ENCODE measurements at regions of chr2 and their contacts with region 1.

Region 1: GRCh38 chr2:136135921-136136906 is 18.3 kb upstream of the CXCR4 start:
- DNase-seq: peak; percentile 78
- H3K4me3 Mint-ChIP-seq: no peak overlapping the region
- H3K27ac Mint-ChIP-seq: peak overlapping the region; percentile 79
- H3K4me1 Mint-ChIP-seq: peaks cover 94% of the 10 kb centered on the region
- H3K27me3 Mint-ChIP-seq: peaks cover 25% of the 10 kb centered on the region

Region 2: DNA sequence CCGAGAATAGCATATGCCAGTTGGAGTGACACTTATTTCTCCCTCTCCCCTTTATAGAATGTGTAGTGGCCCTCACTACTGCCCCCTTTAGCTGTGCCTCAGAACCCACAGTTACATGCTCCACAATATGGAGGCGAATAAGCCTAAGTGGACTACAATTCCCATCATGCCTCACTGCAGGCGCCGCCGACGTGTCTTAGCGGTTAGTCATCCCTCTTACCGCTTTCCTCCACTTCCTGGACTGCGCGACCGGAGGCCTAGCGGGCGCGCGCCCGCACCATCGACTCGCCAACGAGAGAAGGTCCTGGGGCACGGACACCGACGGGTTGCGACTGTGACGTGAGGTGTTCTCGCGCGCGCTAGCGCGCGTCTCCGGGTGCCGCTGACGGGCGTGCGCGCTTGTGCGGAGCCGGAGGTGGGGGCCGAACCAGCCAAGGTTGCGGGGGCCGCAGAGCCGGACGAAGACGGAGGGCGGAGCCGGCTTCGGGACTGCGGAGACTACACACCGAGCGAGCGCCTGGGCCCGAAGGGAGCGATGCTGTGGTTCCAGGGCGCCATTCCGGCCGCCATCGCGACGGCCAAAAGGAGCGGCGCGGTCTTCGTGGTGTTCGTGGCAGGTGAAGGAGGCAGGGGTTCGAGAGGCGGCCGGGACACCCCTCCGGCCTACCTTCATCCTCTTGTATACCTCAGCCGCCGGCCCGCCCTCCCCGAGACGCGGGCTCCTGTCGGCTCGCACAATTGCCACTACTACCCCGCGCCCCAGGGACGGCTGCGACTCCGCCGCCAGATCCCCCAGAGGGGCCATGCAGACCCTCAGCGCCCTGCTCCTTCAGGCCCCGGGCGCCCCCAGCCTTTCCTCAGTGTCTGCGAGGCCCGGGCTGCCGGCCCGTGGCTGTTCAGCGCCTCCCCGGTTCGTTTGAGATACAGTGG is 394.6 kb before region 1 on chr2 and contains the start of gene UBXN4:
- CTCF ChIA-PET with region 1: no interaction called
- intact Hi-C with region 1: loop called (anchors 5 kb)
- DNase-seq: peak; percentile 98
- H3K4me3 Mint-ChIP-seq: peak within 1 kb of the TSS; percentile 98
- H3K27ac Mint-ChIP-seq: peak within 1 kb of the TSS; percentile 99
- H3K4me1 Mint-ChIP-seq: peaks cover 30% of the 10 kb centered on the region
- H3K27me3 Mint-ChIP-seq: no peaks in the 10 kb centered on the region
- total RNA-seq, gene UBXN4: 100 to 105 TPM

Region 3: DNA sequence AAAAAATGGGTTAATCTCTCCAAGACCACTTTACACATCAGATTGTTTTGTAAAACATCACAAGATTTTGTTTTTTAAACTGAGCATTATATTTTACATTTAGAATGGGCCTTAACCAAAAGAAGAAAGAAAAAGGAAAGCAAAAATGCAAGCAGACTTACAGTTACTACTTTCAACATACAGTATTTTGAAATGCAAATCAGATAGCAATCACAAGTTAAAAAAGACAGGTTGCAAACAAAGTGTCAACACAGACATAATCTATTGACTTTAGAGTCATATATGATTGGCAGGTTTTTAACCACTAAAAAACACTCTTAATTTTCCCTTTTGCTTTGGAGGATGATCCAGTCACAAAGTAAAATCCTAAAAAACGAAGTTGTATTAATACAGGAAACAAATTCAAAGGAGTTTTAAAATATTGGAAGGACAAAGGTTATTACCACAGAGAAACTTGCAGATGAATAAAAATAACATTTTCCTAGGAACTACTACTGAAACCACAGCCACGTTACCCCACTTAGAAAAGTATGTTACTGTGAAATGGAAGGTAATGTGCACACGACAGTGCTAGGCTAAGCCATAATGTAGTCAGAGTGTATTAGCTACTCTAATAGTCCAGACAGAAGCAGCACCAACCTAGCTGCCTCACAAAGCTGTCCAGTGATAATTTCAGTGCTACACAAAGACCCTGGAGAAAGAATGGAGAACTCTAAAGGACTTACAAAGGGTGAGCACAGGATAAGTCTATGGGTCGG is 173.7 kb before region 1 on chr2:
- CTCF ChIA-PET with region 1: no interaction called
- intact Hi-C with region 1: no loop called
- DNase-seq: no peak
- H3K4me3 Mint-ChIP-seq: no peak overlapping the region
- H3K27ac Mint-ChIP-seq: no peak overlapping the region
- H3K4me1 Mint-ChIP-seq: peaks cover 40% of the 10 kb centered on the region
- H3K27me3 Mint-ChIP-seq: no peaks in the 10 kb centered on the region

Region 4: DNA sequence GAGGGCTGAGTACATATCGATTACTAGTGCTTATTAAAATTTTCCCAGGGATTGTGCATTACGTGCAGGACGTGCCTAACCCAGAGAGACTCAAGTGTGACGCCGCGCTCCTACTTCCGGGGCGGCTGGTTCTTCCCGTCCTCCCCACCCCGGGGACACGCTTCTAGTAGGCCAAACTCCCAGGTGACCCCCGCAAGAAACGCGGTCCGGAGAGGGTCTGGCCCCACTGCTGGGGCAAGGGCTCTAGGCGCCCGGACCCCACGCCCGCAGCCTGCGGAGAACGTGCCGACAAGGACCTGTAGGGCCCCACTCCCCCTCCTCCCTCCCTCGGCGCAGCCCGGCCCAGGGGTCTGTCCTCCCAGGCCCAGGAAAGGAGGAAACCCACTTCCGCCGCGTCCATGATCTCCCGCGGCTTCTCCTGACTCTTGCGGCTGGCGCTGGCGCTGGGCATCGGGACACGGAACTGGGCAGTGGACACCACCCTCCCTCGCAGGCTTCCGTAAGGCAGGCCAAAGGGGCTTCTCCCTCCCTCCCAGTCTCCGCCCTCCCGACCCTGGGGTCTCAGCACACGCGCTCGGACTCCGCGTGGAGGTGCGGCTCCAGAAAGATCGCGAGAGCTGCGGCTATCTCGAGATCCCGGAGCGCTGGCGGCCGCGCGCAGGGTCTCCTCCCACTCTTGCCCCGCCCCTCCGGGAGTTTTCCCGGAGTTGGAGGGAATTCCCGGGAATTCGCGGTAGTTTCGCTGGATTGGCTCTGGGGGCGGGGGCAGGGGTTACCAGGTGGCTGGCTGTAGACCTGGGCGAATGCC is 151.0 kb before region 1 on chr2 and contains the start of gene DARS1:
- CTCF ChIA-PET with region 1: no interaction called
- intact Hi-C with region 1: loop called (anchors 1 kb)
- DNase-seq: peak; percentile 90
- H3K4me3 Mint-ChIP-seq: peak within 1 kb of the TSS; percentile 95
- H3K27ac Mint-ChIP-seq: peak within 1 kb of the TSS; percentile 97
- H3K4me1 Mint-ChIP-seq: peaks cover 39% of the 10 kb centered on the region
- H3K27me3 Mint-ChIP-seq: no peaks in the 10 kb centered on the region
- total RNA-seq, gene DARS1: 161 to 177 TPM

Region 5: GRCh38 chr2:136117909-136118818 is 18.1 kb before region 1 on chr2 and contains the start of gene CXCR4:
- CTCF ChIA-PET with region 1: interaction called, 3 read pairs
- intact Hi-C with region 1: loop called (anchors 1 kb)
- DNase-seq: peak; percentile 82
- H3K4me3 Mint-ChIP-seq: peak within 1 kb of the TSS; percentile 95
- H3K27ac Mint-ChIP-seq: peak within 1 kb of the TSS; percentile 91
- H3K4me1 Mint-ChIP-seq: peaks cover 57% of the 10 kb centered on the region
- H3K27me3 Mint-ChIP-seq: no peaks in the 10 kb centered on the region
- total RNA-seq, gene CXCR4: 70.2 to 72.6 TPM

Region 6: DNA sequence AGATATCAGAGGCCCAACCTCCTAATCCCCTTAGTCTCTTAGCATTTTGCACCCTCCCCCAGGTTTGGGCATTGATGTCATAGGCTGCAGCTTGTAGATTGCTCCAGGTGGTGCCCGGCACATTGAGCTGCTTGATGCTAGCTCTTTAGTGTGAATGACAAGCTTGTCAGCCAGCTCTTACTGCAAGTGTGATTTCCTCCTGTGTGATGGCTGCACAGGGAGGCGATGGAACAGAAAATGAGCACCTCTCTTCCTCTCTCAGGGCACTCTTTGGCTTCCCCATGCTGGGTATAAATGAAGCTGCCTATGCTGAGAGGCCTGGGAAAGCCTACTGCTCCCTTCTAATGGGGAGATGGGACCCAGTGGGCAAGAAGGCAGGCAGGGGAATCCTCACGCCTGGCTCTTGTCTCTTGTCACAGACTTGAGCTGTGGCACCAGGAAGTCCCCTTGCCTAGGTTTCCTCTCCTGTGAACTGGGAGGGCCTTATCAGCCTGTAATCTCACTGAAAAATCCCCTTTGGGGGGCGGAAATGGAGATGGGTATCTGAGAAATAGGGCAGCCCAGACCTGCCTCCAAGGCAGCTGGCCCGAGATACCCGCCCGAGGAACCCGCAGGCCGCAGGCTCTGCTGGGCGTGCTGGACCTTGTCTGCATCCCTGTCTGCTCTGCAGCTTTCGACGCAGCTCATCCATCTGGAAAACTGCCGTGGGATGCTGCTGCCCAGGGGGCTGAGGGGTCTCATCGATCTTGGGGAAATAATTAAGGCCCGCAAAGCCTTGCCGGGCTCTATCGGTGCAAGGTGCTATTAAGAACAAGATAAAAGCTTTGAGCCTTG is 145.3 kb after region 1 on chr2:
- CTCF ChIA-PET with region 1: no interaction called
- intact Hi-C with region 1: loop called (anchors 1 kb)
- DNase-seq: peak; percentile 73
- H3K4me3 Mint-ChIP-seq: no peak overlapping the region
- H3K27ac Mint-ChIP-seq: peak overlapping the region; percentile 74
- H3K4me1 Mint-ChIP-seq: peaks cover 43% of the 10 kb centered on the region
- H3K27me3 Mint-ChIP-seq: no peaks in the 10 kb centered on the region

Region 7: GRCh38 chr2:136362676-136363390 is 226.6 kb after region 1 on chr2:
- CTCF ChIA-PET with region 1: no interaction called
- intact Hi-C with region 1: loop called (anchors 1 kb)
- DNase-seq: peak; percentile 68
- H3K4me3 Mint-ChIP-seq: no peak overlapping the region
- H3K27ac Mint-ChIP-seq: peak overlapping the region; percentile 42
- H3K4me1 Mint-ChIP-seq: peaks cover 51% of the 10 kb centered on the region
- H3K27me3 Mint-ChIP-seq: peaks cover 4% of the 10 kb centered on the region